Right ventricle myocardium superior (tissue), 1 donor: ENCODE measurements at regions of chr16 and their contacts with region 1.

Region 1: DNA sequence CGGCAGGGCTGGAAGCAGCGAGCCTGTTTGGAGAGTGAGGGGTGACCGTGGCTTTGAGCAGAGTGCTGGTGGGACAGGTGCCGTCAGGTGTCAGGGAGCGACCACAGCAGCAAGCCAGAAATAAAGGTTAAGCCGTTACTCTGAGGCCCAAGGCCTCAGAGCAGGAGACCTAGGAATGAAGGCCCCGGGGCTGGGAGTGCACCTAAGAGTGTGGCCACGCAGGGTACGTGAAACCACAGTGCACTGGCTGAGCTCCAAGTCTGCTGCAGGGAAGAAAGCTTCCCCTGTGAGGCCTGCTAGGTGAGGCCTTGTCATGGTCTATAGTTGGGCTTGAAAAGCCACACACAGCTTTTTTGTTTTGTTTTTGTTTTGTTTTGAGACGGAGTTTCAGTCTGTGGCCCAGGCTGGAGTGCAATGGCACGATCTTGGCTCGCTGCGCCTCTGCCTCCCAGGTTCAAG is 8.7 kb downstream of the CLUAP1 start:
- DNase-seq: no peak
- ATAC-seq: no peak

Region 2: DNA sequence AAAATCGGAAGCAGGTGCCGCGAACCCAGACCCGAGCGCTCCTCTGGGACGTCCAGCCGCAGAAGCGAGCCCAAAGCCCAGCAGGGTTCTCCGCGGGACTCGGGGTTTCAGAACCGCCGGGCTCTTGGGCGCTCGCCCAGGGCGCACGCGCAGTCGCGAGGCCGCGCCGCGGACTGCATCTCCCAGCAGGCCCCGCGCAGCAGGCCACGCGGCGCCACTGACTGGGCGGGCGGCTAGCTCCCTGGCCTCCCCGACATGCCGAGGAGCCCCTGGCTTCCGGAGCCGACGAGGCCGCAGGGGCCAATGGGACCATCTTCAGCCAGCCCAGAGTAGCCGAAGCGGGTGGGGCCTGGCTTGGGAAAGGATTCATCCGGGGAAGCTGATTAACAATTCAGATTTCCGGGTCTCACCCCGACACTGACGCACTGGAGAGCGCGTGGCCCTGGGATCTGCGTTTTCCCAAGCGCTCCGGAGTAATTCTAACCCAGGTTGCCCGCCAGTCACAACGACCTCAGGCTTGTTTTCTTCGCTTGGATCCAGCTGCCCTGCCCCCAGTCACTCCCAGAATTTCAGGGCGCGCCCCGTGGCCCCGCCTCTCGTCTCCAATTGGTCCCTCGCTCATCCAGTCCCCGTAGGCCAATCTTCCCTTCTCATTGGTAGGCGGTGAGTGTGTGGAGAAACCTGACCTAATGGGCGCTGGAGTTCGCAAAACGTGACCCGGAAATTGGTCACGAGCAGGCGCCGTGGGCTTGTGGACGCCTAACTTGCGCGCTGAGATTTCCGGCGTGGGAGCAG is 226.6 kb before region 1 on chr16 and contains the start of gene ZNF263:
- intact Hi-C with region 1: loop called (anchors 10 kb)
- DNase-seq: peak; percentile 96
- ATAC-seq: peak; percentile 97
- total RNA-seq, gene ZNF263: 7.9 TPM

Region 3: DNA sequence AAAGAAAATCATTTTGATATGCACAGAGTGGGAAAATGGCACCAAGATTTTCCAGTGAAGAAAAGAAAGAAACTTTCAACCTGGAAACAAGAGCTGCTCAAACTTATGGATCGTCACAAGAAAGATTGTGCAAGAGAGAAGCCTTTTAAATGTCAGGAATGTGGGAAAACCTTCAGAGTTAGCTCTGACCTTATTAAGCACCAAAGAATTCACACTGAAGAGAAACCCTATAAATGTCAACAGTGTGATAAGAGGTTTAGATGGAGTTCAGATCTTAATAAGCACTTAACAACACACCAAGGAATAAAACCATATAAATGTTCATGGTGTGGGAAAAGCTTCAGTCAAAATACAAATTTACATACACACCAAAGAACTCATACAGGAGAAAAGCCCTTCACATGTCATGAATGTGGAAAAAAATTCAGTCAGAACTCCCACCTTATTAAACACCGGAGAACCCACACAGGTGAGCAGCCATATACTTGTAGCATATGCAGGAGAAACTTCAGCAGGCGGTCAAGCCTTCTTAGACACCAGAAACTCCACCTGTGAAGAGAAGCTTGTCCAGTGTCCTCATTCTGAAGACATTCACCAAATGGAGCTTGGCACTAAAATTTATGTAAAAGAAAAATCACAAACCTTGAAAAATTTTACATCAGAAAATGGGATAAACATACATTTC is 192.0 kb before region 1 on chr16:
- intact Hi-C with region 1: no loop called
- DNase-seq: no peak
- ATAC-seq: no peak

Region 4: DNA sequence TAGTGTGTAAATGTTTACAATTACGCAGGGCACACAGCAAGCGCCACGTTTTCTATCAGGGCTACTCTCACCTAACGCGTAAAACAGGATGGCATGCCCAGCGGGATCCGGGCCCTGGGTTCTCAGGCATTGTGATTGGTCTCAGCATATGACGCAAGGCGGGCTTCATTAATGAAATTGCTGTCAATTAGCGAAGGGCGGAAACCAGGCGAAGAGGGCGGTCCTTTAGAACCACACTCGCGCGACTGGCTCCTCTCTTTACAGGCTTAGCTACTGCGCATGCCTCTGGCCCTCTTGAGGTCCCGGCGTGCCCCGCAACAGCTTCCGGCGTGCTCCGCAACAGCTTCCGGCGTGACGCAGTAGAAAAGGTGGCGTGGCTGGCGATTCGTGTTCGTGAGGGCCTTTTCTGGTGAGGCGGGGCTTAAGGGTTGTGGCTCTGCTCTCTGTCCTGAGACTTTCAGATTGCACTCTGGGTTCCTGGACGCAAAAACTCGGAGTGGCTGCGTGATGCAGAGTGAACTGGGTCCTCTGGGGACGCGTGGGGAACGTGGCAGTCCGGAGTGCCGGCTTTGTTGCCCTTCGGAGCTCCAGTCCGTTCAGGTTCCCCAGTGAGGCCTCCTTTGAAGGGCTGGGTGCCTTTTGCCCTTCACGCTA is 144.6 kb before region 1 on chr16:
- intact Hi-C with region 1: loop called (anchors 10 kb)
- DNase-seq: peak; percentile 90
- ATAC-seq: peak; percentile 99